Activated naive CD4-positive, alpha-beta T cell treated with anti-CD3 and anti-CD28 coated beads for 36 hours (primary cell): ENCODE measurements at regions of chr14 and their contacts with region 1.

Region 1: GRCh38 chr14:23057757-23058653 is 685 bp upstream of the CDH24 start:
- DNase-seq: peak; percentile 92
- H3K4me3 Mint-ChIP-seq: peak overlapping the region; percentile 80
- H3K27ac Mint-ChIP-seq: no peak overlapping the region
- H3K4me1 Mint-ChIP-seq: peaks cover 16% of the 10 kb centered on the region
- H3K27me3 Mint-ChIP-seq: peaks cover 5% of the 10 kb centered on the region

Region 2: DNA sequence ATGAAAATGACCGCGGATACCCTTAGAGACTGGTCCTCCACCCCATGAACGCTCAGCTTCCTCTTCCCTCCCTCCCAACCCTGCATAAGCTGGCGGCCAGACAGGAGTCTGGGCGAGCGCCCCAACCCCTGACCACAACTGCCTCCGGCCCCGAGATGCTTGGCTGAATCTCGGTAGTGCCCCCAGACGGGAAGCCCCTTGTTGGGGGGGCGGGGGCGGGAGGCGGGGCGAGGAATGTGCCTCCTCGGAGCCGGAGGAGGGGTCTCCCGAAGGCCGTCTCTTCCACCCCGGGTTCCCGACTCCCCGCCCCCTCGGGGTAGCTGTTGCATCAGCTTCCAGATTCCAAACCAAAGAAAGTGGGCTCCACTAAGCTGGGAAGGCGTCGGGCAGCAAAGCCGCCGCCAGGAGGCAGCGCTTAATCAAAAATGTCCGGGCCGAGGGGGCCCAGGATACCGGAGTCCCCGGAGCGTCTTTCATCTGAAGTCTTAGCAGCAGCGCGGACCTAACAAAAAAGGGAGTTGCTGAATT is 235.4 kb before region 1 on chr14:
- CTCF ChIA-PET with region 1: no interaction called
- intact Hi-C with region 1: loop called (anchors 2 kb)
- DNase-seq: peak; percentile 75
- H3K4me3 Mint-ChIP-seq: peak overlapping the region; percentile 61
- H3K27ac Mint-ChIP-seq: no peak overlapping the region
- H3K4me1 Mint-ChIP-seq: peaks cover 31% of the 10 kb centered on the region
- H3K27me3 Mint-ChIP-seq: peaks cover 1% of the 10 kb centered on the region

Region 3: GRCh38 chr14:22994762-22995275 is 63.2 kb before region 1 on chr14:
- CTCF ChIA-PET with region 1: interaction called, 713 read pairs
- intact Hi-C with region 1: loop called (anchors 1 kb)
- DNase-seq: peak; percentile 56
- H3K4me3 Mint-ChIP-seq: no peak overlapping the region
- H3K27ac Mint-ChIP-seq: no peak overlapping the region
- H3K4me1 Mint-ChIP-seq: no peaks in the 10 kb centered on the region
- H3K27me3 Mint-ChIP-seq: no peaks in the 10 kb centered on the region

Region 4: GRCh38 chr14:23006544-23007419 is 51.2 kb before region 1 on chr14:
- CTCF ChIA-PET with region 1: interaction called, 29 read pairs
- intact Hi-C with region 1: loop called (anchors 1 kb)
- DNase-seq: peak; percentile 99
- H3K4me3 Mint-ChIP-seq: peak overlapping the region; percentile 96
- H3K27ac Mint-ChIP-seq: peak overlapping the region; percentile 98
- H3K4me1 Mint-ChIP-seq: peaks cover 36% of the 10 kb centered on the region
- H3K27me3 Mint-ChIP-seq: no peaks in the 10 kb centered on the region

Region 5: GRCh38 chr14:23041729-23042128 is 16.3 kb before region 1 on chr14:
- CTCF ChIA-PET with region 1: interaction called, 10 read pairs
- intact Hi-C with region 1: no loop called
- DNase-seq: no peak
- H3K4me3 Mint-ChIP-seq: no peak overlapping the region
- H3K27ac Mint-ChIP-seq: no peak overlapping the region
- H3K4me1 Mint-ChIP-seq: no peaks in the 10 kb centered on the region
- H3K27me3 Mint-ChIP-seq: no peaks in the 10 kb centered on the region

Region 6: DNA sequence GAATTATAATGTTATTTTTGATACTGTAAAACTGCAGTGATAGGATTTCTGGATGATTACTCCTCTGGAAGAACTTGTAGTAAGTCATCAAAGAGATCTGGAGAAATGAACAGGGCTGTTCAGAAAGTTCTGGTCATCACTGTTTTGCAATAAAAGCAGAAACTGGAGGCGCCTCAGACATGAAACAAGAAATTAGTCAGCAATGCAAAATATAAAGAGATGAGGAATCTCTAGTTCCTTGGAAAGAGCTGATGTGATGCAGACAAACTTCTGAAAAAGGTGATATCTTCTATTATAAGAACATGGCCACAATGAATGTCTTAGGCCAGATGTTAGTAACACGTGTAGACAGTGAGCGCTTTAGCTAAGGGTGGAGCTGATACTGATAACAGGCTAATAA is 27.5 kb after region 1 on chr14:
- CTCF ChIA-PET with region 1: interaction called, 11 read pairs
- intact Hi-C with region 1: no loop called
- DNase-seq: no peak
- H3K4me3 Mint-ChIP-seq: no peak overlapping the region
- H3K27ac Mint-ChIP-seq: peak overlapping the region; percentile 48
- H3K4me1 Mint-ChIP-seq: peaks cover 44% of the 10 kb centered on the region
- H3K27me3 Mint-ChIP-seq: no peaks in the 10 kb centered on the region

Region 7: DNA sequence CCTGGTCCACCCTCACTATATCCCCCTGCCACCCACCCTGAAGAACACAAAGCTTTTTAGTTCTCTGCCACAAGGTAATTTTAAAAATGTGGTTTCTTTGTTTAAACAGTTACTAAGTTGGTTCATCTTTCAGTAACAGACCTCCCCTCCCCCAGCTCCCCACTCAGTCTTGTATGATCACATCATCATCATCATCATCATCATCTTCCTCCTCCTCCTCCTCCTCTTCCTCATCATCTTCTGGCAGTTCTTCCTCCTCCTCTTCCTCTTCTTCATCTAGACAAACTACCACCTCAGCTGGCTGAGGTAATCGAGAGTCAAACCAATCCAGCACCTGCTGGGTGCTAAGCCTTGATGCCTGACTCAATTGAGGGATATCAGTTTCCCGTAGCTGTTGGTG is 217.4 kb after region 1 on chr14:
- CTCF ChIA-PET with region 1: no interaction called
- intact Hi-C with region 1: no loop called
- DNase-seq: no peak
- H3K4me3 Mint-ChIP-seq: no peak overlapping the region
- H3K27ac Mint-ChIP-seq: peak overlapping the region; percentile 6
- H3K4me1 Mint-ChIP-seq: peaks cover 2% of the 10 kb centered on the region
- H3K27me3 Mint-ChIP-seq: no peaks in the 10 kb centered on the region